IMR-90 (cell line): ENCODE measurements at regions of chr13 and their contacts with region 1.

Region 1: GRCh38 chr13:21670883-21671619 is at the start of gene FGF9:
- DNase-seq: peak; percentile 79
- ATAC-seq: peak; percentile 68
- H3K4me3 ChIP-seq: peak within 1 kb of the TSS; percentile 61
- H3K27ac ChIP-seq: peak within 1 kb of the TSS; percentile 31
- H3K4me1 ChIP-seq: peaks cover 9% of the 10 kb centered on the region
- H3K27me3 ChIP-seq: peaks cover 34% of the 10 kb centered on the region
- CTCF ChIP-seq: peak; percentile 18; the same call in 1 of the 2 replicates
- POLR2A ChIP-seq: no peak
- RAD21 ChIP-seq: no peak
- total RNA-seq, gene FGF9: under 0.01 TPM in 2 replicates

Region 2: DNA sequence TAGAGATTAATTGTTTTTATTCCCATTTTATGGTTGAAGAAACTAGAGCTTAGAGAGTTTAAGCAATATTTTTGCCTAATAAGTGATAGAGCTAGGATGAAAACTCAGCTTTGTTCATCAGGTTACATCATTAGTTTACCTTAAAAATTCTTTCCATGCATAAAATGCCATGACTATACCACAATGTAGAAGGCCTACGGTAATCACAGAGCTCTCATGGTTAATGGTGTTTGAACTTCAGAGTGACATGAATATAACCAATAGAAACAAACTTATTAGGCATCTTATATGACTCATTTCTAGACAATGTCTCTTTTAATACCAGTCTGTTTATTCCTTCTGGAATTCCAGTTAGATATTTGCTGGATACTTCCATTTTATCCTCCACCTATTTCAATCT is 78.4 kb after region 1 on chr13:
- CTCF ChIA-PET with region 1: no interaction called
- POLR2A ChIA-PET with region 1: no interaction called
- dilution Hi-C with region 1: no loop called
- in situ Hi-C with region 1: no loop called
- intact Hi-C with region 1: loop called (anchors 5 kb)
- DNase-seq: peak; percentile 94
- ATAC-seq: peak; percentile 94
- H3K4me3 ChIP-seq: no peak overlapping the region
- H3K27ac ChIP-seq: peak overlapping the region; percentile 99; the same call in 1 of the 2 replicates
- H3K4me1 ChIP-seq: peaks cover 9% of the 10 kb centered on the region
- H3K27me3 ChIP-seq: no peaks in the 10 kb centered on the region
- CTCF ChIP-seq: no peak
- POLR2A ChIP-seq: no peak
- RAD21 ChIP-seq: no peak

Region 3: GRCh38 chr13:21823949-21824348 is 152.9 kb after region 1 on chr13:
- CTCF ChIA-PET with region 1: no interaction called
- POLR2A ChIA-PET with region 1: no interaction called
- dilution Hi-C with region 1: no loop called
- in situ Hi-C with region 1: no loop called
- intact Hi-C with region 1: loop called (anchors 10 kb)
- DNase-seq: no peak
- ATAC-seq: no peak
- H3K4me3 ChIP-seq: no peak overlapping the region
- H3K27ac ChIP-seq: no peak overlapping the region
- H3K4me1 ChIP-seq: peaks cover 2% of the 10 kb centered on the region; the same call in 1 of the 2 replicates
- H3K27me3 ChIP-seq: no peaks in the 10 kb centered on the region
- CTCF ChIP-seq: no peak
- POLR2A ChIP-seq: no peak
- RAD21 ChIP-seq: no peak

Region 4: DNA sequence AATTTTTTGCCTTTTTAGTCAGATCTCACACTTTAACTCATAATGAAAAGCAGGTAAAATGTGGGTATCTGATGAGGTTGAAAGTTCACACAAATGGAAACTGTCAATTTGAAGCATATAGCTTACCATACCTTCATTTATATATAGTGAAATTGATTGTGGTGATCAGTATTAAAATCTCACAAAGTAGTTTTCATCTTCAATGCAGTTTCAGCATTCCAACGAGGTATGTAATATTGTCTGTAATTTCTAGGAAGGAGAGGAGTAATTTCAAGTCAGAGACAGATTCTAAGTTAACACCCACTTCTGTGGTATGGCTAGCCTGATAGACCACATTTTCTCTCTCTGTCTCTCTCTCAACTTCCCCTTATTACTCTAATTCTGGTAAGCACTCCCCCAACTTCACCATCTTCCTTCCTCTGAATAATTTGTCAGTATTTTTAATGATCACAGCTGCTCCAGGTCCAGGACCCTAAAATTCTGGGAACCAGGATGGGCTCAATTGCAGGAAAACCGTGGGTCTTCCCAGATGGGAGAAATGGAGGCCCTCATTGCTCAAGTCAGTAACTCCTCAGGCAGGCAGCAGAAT is 455.5 kb after region 1 on chr13:
- CTCF ChIA-PET with region 1: no interaction called
- POLR2A ChIA-PET with region 1: no interaction called
- dilution Hi-C with region 1: no loop called
- in situ Hi-C with region 1: no loop called
- intact Hi-C with region 1: loop called (anchors 10 kb)
- DNase-seq: no peak
- ATAC-seq: no peak
- H3K4me3 ChIP-seq: no peak overlapping the region
- H3K27ac ChIP-seq: peak overlapping the region; percentile 64; the same call in 1 of the 2 replicates
- H3K4me1 ChIP-seq: peaks cover 16% of the 10 kb centered on the region
- H3K27me3 ChIP-seq: no peaks in the 10 kb centered on the region
- CTCF ChIP-seq: no peak
- POLR2A ChIP-seq: no peak
- RAD21 ChIP-seq: no peak

Region 5: GRCh38 chr13:22198001-22198400 is 527.0 kb after region 1 on chr13:
- CTCF ChIA-PET with region 1: no interaction called
- POLR2A ChIA-PET with region 1: no interaction called
- dilution Hi-C with region 1: no loop called
- in situ Hi-C with region 1: no loop called
- intact Hi-C with region 1: loop called (anchors 10 kb)
- DNase-seq: no peak
- ATAC-seq: no peak
- H3K4me3 ChIP-seq: no peak overlapping the region
- H3K27ac ChIP-seq: no peak overlapping the region
- H3K4me1 ChIP-seq: peaks cover 8% of the 10 kb centered on the region; the same call in 1 of the 2 replicates
- H3K27me3 ChIP-seq: peaks cover 2% of the 10 kb centered on the region; the same call in 1 of the 2 replicates
- CTCF ChIP-seq: no peak
- POLR2A ChIP-seq: no peak
- RAD21 ChIP-seq: no peak